ENCODE measurements at regions of chr7 and their contacts with region 1.

Region 1: GRCh38 chr7:24005517-24005916 is 278.5 kb upstream of the NPY start:
- DNase-seq: no peak
- H3K4me3 ChIP-seq: no peak overlapping the region
- H3K27ac ChIP-seq: no peak overlapping the region
- H3K4me1 ChIP-seq: no peaks in the 10 kb centered on the region
- H3K27me3 ChIP-seq: no peaks in the 10 kb centered on the region
- CTCF ChIP-seq: no peak
- POLR2A ChIP-seq: no peak

Region 2: GRCh38 chr7:23234569-23235296 is 770.8 kb before region 1 on chr7:
- intact Hi-C with region 1: no loop called
- DNase-seq: no peak
- H3K4me3 ChIP-seq: no peak overlapping the region
- H3K27ac ChIP-seq: no peak overlapping the region
- H3K4me1 ChIP-seq: no peaks in the 10 kb centered on the region
- H3K27me3 ChIP-seq: no peaks in the 10 kb centered on the region
- CTCF ChIP-seq: no peak
- POLR2A ChIP-seq: no peak

Region 3: GRCh38 chr7:23863209-23863798 is 142.2 kb before region 1 on chr7:
- intact Hi-C with region 1: no loop called
- DNase-seq: no peak
- H3K4me3 ChIP-seq: no peak overlapping the region
- H3K27ac ChIP-seq: no peak overlapping the region
- H3K4me1 ChIP-seq: no peaks in the 10 kb centered on the region
- H3K27me3 ChIP-seq: no peaks in the 10 kb centered on the region
- CTCF ChIP-seq: no peak
- POLR2A ChIP-seq: no peak

Region 4: GRCh38 chr7:24199978-24200377 is 194.5 kb after region 1 on chr7:
- intact Hi-C with region 1: loop called (anchors 5 kb)
- DNase-seq: no peak
- H3K4me3 ChIP-seq: no peak overlapping the region
- H3K27ac ChIP-seq: no peak overlapping the region
- H3K4me1 ChIP-seq: no peaks in the 10 kb centered on the region
- H3K27me3 ChIP-seq: no peaks in the 10 kb centered on the region
- CTCF ChIP-seq: no peak
- POLR2A ChIP-seq: no peak